ENCODE measurements at regions of chr13 and their contacts with region 1.

Region 1: GRCh38 chr13:101115762-101116171 is 300.5 kb downstream of the NALCN start:
- DNase-seq: no peak
- H3K4me3 ChIP-seq: no peak overlapping the region
- H3K27ac ChIP-seq: no peak overlapping the region
- H3K4me1 ChIP-seq: no peaks in the 10 kb centered on the region
- H3K27me3 ChIP-seq: no peaks in the 10 kb centered on the region
- CTCF ChIP-seq: peak; percentile 33; the same call in 1 of the 2 replicates
- EP300 ChIP-seq: no peak
- RAD21 ChIP-seq: no peak

Region 2: DNA sequence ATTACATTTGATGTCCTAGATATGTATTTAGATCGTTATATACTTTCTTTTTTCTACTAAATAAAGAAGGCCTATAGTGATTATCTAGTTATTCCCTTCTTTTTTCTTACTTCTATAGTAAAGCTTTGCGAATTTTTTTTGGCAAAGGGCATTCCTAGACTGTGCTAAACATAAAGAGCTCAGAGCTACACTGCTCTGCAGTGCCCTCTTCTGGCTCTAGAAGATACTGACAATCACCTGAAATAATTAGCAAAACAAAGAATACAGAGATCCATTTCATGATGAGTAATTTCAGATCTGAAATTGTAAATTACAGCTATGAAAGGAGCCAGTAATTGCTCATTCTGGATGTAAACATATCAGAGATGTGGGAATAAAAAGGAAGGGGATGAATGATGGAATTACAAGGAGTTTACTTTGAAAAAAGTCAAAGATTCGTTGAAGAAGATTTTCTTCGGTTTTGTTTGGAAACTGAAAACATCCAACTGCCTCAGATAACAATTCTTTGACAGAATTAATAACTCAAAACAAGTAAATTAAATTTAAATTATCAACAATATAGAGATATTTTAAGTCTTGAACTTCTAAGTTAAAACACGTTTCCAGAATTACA is 12.1 kb after region 1 on chr13:
- CTCF ChIA-PET with region 1: interaction called, 17 read pairs
- POLR2A ChIA-PET with region 1: no interaction called
- DNase-seq: peak; percentile 53
- H3K4me3 ChIP-seq: no peak overlapping the region; a peak in 1 of 4 replicates
- H3K27ac ChIP-seq: no peak overlapping the region
- H3K4me1 ChIP-seq: no peaks in the 10 kb centered on the region
- H3K27me3 ChIP-seq: no peaks in the 10 kb centered on the region
- CTCF ChIP-seq: peak; percentile 92
- EP300 ChIP-seq: no peak
- RAD21 ChIP-seq: peak; percentile 84